Transverse colon (tissue), 4 donors: ENCODE measurements at regions of chr4 and their contacts with region 1.

Region 1: GRCh38 chr4:131366724-131367123 is 1782.4 kb upstream of the PCDH10 start:
- DNase-seq: no peak
- H3K4me3 ChIP-seq: no peak overlapping the region
- H3K27ac ChIP-seq: no peak overlapping the region
- H3K4me1 ChIP-seq: no peaks in the 10 kb centered on the region
- H3K27me3 ChIP-seq: no peaks in the 10 kb centered on the region
- CTCF ChIP-seq: no peak
- EP300 ChIP-seq: no peak
- POLR2A ChIP-seq: no peak

Region 2: GRCh38 chr4:131296192-131296591 is 70.5 kb before region 1 on chr4:
- in situ Hi-C with region 1: no loop called
- intact Hi-C with region 1: loop called (anchors 2 kb)
- DNase-seq: no peak
- H3K4me3 ChIP-seq: no peak overlapping the region
- H3K27ac ChIP-seq: no peak overlapping the region
- H3K4me1 ChIP-seq: no peaks in the 10 kb centered on the region
- H3K27me3 ChIP-seq: no peaks in the 10 kb centered on the region
- CTCF ChIP-seq: no peak
- EP300 ChIP-seq: no peak
- POLR2A ChIP-seq: no peak

Region 3: DNA sequence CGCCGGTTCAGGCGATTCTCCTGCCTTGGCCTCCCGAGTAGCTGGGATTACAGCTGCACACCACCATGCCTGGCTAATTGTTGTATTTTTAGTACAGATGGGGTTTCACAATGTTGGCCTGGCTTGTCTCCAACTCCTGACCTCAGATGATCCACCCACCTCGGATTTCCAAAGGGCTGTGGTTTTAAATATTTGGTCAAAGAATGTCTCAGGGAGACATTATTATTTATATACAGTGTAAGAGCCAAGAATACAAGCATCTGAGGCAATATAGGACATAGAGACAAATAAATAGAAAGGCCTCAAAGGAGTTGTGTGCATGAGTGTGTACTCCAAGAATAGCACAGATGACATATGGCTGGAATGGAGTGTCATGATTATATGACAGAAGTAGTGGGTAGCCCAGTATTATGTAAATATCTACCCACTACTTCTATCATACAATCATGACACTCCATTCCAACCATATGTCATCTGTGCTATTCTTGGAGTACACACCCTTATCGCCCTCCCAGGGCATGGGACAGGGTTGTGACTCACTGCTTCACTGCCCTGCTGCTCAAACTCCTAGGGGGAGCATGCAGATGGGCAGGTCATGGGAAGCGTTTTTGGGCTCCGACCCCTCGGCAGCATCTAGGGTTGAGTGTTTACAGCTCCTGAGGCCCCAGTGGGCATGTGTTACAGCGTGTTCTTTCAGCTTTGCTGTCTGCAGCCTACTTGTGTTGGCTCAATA is 132.6 kb after region 1 on chr4:
- in situ Hi-C with region 1: no loop called
- intact Hi-C with region 1: no loop called
- DNase-seq: no peak
- H3K4me3 ChIP-seq: no peak overlapping the region
- H3K27ac ChIP-seq: no peak overlapping the region
- H3K4me1 ChIP-seq: no peaks in the 10 kb centered on the region
- H3K27me3 ChIP-seq: no peaks in the 10 kb centered on the region
- CTCF ChIP-seq: no peak
- EP300 ChIP-seq: no peak
- POLR2A ChIP-seq: no peak